PC-9 (cell line): ENCODE measurements at regions of chr6 and their contacts with region 1.

Region 1: GRCh38 chr6:12605888-12606345 is 110.7 kb upstream of the PHACTR1 start:
- DNase-seq: peak; percentile 53 to 79
- H3K4me3 ChIP-seq: no peak overlapping the region
- H3K27ac ChIP-seq: no peak overlapping the region
- H3K4me1 ChIP-seq: peaks cover 16% of the 10 kb centered on the region
- H3K27me3 ChIP-seq: no peaks in the 10 kb centered on the region
- CTCF ChIP-seq: peak; percentile 98

Region 2: GRCh38 chr6:11700118-11700718 is 905.7 kb before region 1 on chr6:
- CTCF ChIA-PET with region 1: no interaction called
- POLR2A ChIA-PET with region 1: no interaction called
- intact Hi-C with region 1: loop called (anchors 5 kb)
- DNase-seq: peak in 1 of 2 experiments; percentile 59
- H3K4me3 ChIP-seq: no peak overlapping the region
- H3K27ac ChIP-seq: no peak overlapping the region
- H3K4me1 ChIP-seq: no peaks in the 10 kb centered on the region
- H3K27me3 ChIP-seq: no peaks in the 10 kb centered on the region
- CTCF ChIP-seq: peak; percentile 73

Region 3: DNA sequence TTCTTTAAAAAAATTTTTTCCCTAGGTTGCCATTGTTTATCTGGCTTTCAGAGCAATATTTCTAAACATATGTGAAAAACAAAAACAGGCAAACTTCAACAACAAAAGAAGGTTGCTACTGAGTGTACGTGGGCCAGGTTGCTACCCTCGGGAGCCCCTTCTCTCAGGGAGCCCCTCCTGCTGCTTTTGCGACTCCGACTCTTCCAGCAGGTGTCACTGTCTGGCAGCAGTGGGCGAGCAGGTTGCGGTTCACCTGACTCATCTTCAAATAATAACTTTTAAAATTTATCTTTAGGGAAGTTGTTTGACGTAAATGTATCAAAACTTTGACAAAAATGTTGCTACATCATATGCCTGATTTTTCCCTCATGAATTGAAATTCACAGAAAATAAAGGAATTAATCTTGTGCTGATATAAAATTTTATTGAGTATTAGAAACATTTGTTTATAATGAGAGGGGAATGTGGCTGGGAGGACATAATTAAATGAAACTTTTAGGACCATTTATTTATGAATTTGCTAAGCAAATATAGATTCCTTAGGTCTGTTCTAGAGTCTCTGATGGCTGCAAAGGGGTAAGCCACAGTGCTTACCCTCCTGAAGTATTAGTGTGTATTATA is 455.0 kb before region 1 on chr6:
- CTCF ChIA-PET with region 1: no interaction called
- POLR2A ChIA-PET with region 1: no interaction called
- intact Hi-C with region 1: loop called (anchors 2 kb)
- DNase-seq: peak in 1 of 2 experiments; percentile 47
- H3K4me3 ChIP-seq: no peak overlapping the region
- H3K27ac ChIP-seq: no peak overlapping the region; the same call in 1 of the 2 replicates
- H3K4me1 ChIP-seq: peaks cover 30% of the 10 kb centered on the region
- H3K27me3 ChIP-seq: no peaks in the 10 kb centered on the region
- CTCF ChIP-seq: peak; percentile 81

Region 4: DNA sequence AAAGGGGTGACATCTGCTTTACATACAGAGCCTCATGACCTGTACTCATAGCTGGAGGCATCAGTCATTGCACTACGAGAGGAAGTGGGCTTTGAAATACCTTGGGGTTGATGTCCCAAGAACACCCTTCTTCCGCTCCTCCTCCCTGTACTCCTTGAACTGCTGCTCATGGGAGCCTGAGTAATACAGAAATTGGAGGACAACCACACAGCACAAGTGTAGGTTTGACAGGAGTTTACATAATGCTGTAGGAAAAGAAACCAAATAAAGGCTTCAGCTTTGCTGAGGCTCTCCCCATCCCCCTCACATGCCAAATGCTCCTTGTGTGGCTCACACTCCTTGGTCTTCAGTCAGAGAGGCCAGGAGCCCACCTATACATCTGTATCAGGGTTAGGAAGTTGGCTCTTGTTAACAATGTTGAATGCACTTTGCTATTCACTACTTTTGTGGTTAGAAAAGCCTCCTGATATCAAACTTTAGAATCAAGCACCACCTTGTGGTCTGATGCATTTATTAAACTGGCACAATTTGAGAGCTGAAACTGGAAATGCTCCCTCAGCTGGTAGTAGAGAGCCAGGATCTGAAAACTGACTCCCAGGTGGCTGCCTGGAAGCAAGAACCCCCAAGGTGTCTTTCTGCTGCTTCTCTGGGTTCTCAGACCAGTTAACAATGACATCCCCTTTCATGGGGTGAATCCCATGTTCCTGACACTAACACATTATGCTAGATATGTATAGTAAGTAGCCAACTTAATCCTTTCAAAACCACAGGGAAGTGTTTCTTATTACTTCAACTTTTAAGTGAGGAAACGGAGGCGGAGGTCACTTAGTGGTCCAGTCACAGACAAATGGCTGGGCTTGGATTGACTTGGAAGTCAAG is 372.0 kb before region 1 on chr6:
- CTCF ChIA-PET with region 1: no interaction called
- POLR2A ChIA-PET with region 1: no interaction called
- intact Hi-C with region 1: loop called (anchors 1 kb)
- DNase-seq: peak; percentile 47 to 84
- H3K4me3 ChIP-seq: no peak overlapping the region
- H3K27ac ChIP-seq: no peak overlapping the region
- H3K4me1 ChIP-seq: peaks cover 5% of the 10 kb centered on the region
- H3K27me3 ChIP-seq: no peaks in the 10 kb centered on the region
- CTCF ChIP-seq: peak; percentile 95

Region 5: GRCh38 chr6:12324514-12325147 is 281.3 kb before region 1 on chr6:
- CTCF ChIA-PET with region 1: no interaction called
- POLR2A ChIA-PET with region 1: no interaction called
- intact Hi-C with region 1: loop called (anchors 1 kb)
- DNase-seq: peak; percentile 31 to 56
- H3K4me3 ChIP-seq: peak overlapping the region; percentile 6; the same call in 1 of the 2 replicates
- H3K27ac ChIP-seq: peak overlapping the region; percentile 95
- H3K4me1 ChIP-seq: peaks cover 41% of the 10 kb centered on the region
- H3K27me3 ChIP-seq: no peaks in the 10 kb centered on the region
- CTCF ChIP-seq: no peak

Region 6: GRCh38 chr6:12383448-12383847 is 222.5 kb before region 1 on chr6:
- CTCF ChIA-PET with region 1: no interaction called
- POLR2A ChIA-PET with region 1: no interaction called
- intact Hi-C with region 1: no loop called
- DNase-seq: no peak
- H3K4me3 ChIP-seq: no peak overlapping the region
- H3K27ac ChIP-seq: no peak overlapping the region
- H3K4me1 ChIP-seq: no peaks in the 10 kb centered on the region; the same call in 1 of the 2 replicates
- H3K27me3 ChIP-seq: no peaks in the 10 kb centered on the region
- CTCF ChIP-seq: no peak

Region 7: DNA sequence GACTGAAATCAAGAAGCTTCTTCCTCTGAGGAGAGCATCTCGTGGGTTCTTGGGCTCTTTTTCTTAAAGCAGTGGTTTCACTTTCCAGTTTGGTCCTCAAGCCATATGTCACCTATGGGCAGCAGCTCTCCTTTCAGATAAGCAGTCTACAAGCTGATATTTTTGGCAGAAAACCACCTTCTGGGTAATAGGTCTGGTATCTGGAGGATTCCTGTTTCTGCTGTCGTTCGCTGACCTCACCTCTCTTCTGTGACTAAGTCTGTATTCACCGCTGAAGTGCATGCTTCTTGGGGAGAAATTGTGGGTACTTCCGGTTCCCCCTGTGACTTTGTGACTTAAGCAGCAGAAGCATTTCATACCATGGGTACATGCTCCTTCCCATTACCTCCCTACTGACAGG is 122.2 kb before region 1 on chr6:
- CTCF ChIA-PET with region 1: no interaction called
- POLR2A ChIA-PET with region 1: interaction called, 4 read pairs
- intact Hi-C with region 1: loop called (anchors 5 kb)
- DNase-seq: peak; percentile 70 to 99
- H3K4me3 ChIP-seq: peak overlapping the region; percentile 35; the same call in 1 of the 2 replicates
- H3K27ac ChIP-seq: peak overlapping the region; percentile 82
- H3K4me1 ChIP-seq: peaks cover 30% of the 10 kb centered on the region
- H3K27me3 ChIP-seq: no peaks in the 10 kb centered on the region
- CTCF ChIP-seq: no peak

Region 8: GRCh38 chr6:12504319-12504966 is 101.5 kb before region 1 on chr6:
- CTCF ChIA-PET with region 1: no interaction called
- POLR2A ChIA-PET with region 1: no interaction called
- intact Hi-C with region 1: loop called (anchors 1 kb)
- DNase-seq: no peak
- H3K4me3 ChIP-seq: no peak overlapping the region
- H3K27ac ChIP-seq: no peak overlapping the region
- H3K4me1 ChIP-seq: peaks cover 3% of the 10 kb centered on the region; the same call in 1 of the 2 replicates
- H3K27me3 ChIP-seq: no peaks in the 10 kb centered on the region
- CTCF ChIP-seq: peak; percentile 87

Region 9: GRCh38 chr6:13433709-13434121 is 827.8 kb after region 1 on chr6:
- CTCF ChIA-PET with region 1: no interaction called
- POLR2A ChIA-PET with region 1: no interaction called
- intact Hi-C with region 1: no loop called
- DNase-seq: no peak
- H3K4me3 ChIP-seq: no peak overlapping the region
- H3K27ac ChIP-seq: no peak overlapping the region
- H3K4me1 ChIP-seq: no peaks in the 10 kb centered on the region
- H3K27me3 ChIP-seq: no peaks in the 10 kb centered on the region
- CTCF ChIP-seq: no peak